ENCODE measurements at regions of chr21 and their contacts with region 1.

Region 1: DNA sequence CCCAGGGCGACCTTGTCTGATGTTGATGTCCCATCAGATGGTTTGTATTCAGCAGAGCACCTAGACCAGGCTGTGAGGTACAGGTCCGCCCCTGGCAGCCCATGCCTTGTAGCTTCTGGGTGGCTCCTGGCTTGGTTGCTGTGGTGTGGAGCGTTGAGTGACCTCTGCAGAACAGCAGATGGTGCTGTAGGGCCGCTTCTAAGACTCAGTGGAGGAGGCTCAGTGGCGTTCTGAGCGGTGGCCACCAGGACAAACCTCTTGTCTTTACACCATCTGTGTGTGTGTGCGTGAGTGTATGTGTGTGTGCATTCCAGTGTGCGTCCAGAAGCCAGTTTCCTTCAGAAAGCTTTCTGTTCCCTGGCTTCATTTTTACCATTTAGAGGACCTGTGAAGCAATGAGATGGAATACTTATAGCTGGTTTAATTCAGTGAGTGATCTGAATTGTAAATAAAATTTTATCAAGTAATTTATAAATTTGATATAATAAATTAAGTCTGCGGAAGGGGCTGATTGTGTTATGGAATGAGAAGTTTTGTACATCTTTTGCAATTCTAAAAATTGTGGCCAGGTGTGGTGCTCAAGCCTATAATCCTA is 66.1 kb downstream of the ADARB1 start:
- DNase-seq: peak; percentile 65 to 80 (median 72)
- H3K4me3 ChIP-seq: no peak overlapping the region
- H3K27ac ChIP-seq: no peak overlapping the region
- H3K4me1 ChIP-seq: no peaks in the 10 kb centered on the region
- H3K27me3 ChIP-seq: no peaks in the 10 kb centered on the region
- CTCF ChIP-seq: peak; percentile 57 to 73 (median 67)
- EP300 ChIP-seq: no peak
- POLR2A ChIP-seq: no peak

Region 2: GRCh38 chr21:44454747-44455523 is 685.5 kb before region 1 on chr21 and contains the start of gene LRRC3:
- intact Hi-C with region 1: no loop called
- DNase-seq: peak; percentile 88 to 95 (median 90)
- H3K4me3 ChIP-seq: peak within 1 kb of the TSS; percentile 75
- H3K27ac ChIP-seq: peak within 1 kb of the TSS in 1 of 2 donors; percentile 8
- H3K4me1 ChIP-seq: peaks cover 9% of the 10 kb centered on the region
- H3K27me3 ChIP-seq: no peaks in the 10 kb centered on the region
- CTCF ChIP-seq: no peak
- EP300 ChIP-seq: no peak
- POLR2A ChIP-seq: no peak
- total RNA-seq, gene LRRC3: 3.4 to 6.8 (median 4.0) TPM

Region 3: DNA sequence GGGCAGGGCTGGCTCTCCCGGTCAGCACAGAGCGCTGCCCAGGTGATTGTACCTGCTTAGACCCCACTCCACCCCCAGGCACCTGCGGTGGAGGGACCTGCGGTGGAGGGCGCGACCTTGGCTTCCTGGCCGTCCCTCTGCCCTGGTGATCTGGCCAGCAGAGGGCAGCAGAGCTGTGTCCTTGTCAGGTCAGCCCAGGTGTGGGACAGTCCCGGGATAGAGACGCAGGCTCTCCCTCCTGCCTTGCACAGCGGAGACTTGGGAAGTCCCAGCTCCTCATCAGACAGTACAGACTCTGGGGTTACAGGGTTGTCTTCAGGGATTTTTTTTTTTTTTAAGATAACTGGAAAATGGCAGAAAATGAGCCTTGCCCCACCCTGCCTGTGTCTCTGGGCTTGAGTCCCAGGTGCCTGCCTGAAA is 190.7 kb before region 1 on chr21:
- intact Hi-C with region 1: loop called (anchors 1 to 5 kb)
- DNase-seq: peak; percentile 85 to 92 (median 89)
- H3K4me3 ChIP-seq: no peak overlapping the region
- H3K27ac ChIP-seq: no peak overlapping the region
- H3K4me1 ChIP-seq: no peaks in the 10 kb centered on the region
- H3K27me3 ChIP-seq: no peaks in the 10 kb centered on the region
- CTCF ChIP-seq: peak; percentile 79 to 91 (median 86)
- EP300 ChIP-seq: no peak
- POLR2A ChIP-seq: no peak

Region 4: GRCh38 chr21:45074048-45074817 is 66.2 kb before region 1 on chr21 and contains the start of gene ADARB1:
- intact Hi-C with region 1: loop called in 1 of 4 experiments (anchors 10 kb)
- DNase-seq: peak; percentile 54 to 80 (median 75)
- H3K4me3 ChIP-seq: peak within 1 kb of the TSS; percentile 93
- H3K27ac ChIP-seq: peak within 1 kb of the TSS; percentile 88 to 97
- H3K4me1 ChIP-seq: peaks cover 3% of the 10 kb centered on the region
- H3K27me3 ChIP-seq: no peaks in the 10 kb centered on the region
- CTCF ChIP-seq: no peak
- EP300 ChIP-seq: no peak
- POLR2A ChIP-seq: peak; percentile 59
- total RNA-seq, gene ADARB1: 6.4 to 23.7 (median 16.3) TPM

Region 5: DNA sequence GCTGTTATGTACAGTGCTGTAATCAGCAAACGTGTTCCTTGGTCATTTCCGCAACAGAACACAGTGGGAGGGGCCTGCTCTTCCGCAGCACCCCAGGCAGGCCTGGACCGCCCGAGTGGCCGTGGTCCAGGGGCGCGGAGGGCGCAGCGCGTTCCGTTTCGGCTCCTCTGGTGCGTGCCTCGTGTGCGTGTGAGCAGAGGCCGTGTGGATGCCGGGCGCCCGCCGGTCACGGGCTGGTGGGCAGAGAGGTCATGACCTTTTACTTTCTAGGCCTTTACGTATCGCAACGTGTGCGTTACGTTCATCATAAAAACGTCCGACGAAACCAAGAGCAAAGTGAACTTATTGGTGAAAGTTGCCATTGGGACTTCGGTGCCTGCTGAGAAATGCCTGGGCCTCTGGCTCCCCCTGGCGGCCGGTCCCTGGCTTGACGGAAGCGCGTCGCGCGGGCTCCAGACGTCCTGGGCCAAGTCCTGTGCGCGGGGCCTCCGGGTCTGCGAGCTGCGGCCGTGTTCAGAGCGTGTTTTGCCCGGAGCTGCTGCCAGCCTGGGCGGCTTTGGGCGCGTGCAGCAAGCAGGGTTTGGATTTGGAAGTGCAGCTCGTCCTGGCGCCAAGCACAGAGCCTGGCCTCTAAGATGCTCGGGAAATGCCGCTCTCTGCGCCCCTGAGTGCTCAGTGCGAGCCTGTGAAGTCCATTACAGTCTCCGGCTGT is 298.9 kb after region 1 on chr21:
- intact Hi-C with region 1: loop called in 2 of 4 experiments (anchors 10 kb)
- DNase-seq: peak; percentile 84 to 94 (median 90)
- H3K4me3 ChIP-seq: peak overlapping the region; percentile 26
- H3K27ac ChIP-seq: peak overlapping the region; percentile 63 to 84
- H3K4me1 ChIP-seq: peaks cover 12% of the 10 kb centered on the region
- H3K27me3 ChIP-seq: no peaks in the 10 kb centered on the region
- CTCF ChIP-seq: peak; percentile 94 to 100 (median 100)
- EP300 ChIP-seq: peak; percentile 61
- POLR2A ChIP-seq: peak; percentile 68

Region 6: DNA sequence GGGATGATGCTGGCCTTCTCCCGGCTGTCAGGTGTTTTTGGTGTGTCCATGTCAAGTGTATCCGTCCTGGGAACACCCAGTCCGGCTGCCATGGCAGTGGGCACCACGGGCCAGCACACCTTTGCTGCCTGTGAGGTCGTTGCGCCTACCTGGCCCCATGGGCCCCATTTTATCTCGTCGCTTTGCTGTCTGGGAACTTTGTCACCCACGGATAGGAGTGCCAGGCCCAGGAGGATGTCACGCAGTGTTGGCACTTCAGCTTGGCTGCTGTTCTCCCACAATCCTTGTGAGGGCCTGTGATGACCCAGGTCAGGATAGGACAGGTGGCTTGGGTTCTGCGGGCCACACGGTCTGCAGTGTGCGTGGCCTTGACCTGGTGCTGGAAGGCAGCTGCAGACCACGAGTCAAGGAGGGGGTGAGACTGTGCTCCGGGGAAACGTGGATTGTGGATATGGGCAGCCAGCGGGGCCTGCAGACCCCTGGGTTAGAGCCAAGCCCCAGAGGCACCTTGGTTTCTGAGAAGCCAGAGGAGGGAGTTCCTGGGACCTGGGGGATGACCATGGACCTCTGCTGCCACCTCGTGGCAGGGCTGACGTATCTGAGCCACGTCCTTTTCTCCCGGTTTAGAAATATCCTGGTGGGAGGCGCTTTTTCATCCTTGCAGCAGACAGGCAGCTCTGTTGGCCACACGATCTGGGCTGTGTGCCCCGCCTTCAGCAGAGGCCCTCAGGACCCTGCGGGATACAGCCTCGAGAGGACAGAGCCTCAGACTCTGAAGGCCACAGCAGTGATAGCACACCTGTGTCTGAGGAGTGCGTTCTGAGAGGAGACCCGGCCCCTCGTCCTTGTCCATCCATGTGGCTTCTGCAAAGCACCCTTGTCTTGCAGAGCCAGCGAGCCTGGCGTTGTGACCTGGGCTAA is 680.0 kb after region 1 on chr21:
- intact Hi-C with region 1: loop called in 1 of 4 experiments (anchors 10 kb)
- DNase-seq: peak; percentile 68 to 88 (median 82)
- H3K4me3 ChIP-seq: no peak overlapping the region
- H3K27ac ChIP-seq: no peak overlapping the region
- H3K4me1 ChIP-seq: peaks cover 3% of the 10 kb centered on the region
- H3K27me3 ChIP-seq: no peaks in the 10 kb centered on the region
- CTCF ChIP-seq: peak; percentile 63 to 72 (median 66)
- EP300 ChIP-seq: no peak
- POLR2A ChIP-seq: no peak

Measured in ovary (tissue), 10 donors.